Naive thymus-derived CD4-positive, alpha-beta T cell (primary cell): ENCODE measurements at regions of chr19 and their contacts with region 1.

Region 1: DNA sequence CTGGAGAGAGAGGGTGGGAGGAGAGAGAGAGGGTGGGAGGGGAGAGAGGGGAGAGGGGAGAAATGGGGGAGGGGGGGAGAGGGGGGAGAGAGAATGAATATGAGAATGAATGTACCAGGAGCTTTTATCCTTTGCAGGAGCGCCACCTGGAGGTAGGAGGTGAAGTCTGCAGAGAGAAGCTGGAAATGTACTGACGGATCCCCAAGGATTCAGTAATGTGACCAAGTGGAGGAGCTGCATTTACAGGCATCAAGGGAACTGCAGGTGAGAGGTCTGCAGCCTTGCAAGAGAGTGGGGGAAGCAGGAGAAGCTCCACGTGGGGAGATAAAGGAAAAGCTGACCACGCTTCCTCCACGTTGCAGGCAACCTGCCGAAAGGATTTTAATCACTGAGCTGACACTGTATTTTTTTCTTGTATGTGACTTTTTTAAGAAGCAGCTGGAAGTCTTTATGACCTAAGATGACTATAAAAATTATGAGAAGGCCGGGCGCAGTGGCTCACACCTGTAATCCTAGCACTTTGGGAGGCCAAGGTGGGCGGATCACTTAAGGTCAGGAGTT is 33.7 kb downstream of the VSTM1 start:
- DNase-seq: peak; percentile 9 to 55 (median 31)
- ATAC-seq: peak; percentile 51
- H3K4me3 ChIP-seq: no peak overlapping the region
- H3K4me3 Mint-ChIP-seq: no peak overlapping the region
- H3K27ac ChIP-seq: no peak overlapping the region
- H3K27ac Mint-ChIP-seq: no peak overlapping the region
- H3K4me1 ChIP-seq: no peaks in the 10 kb centered on the region
- H3K4me1 Mint-ChIP-seq: peaks cover 0 to 8% (median 0%) of the 10 kb centered on the region in 7 donors
- H3K27me3 ChIP-seq: no peaks in the 10 kb centered on the region
- H3K27me3 Mint-ChIP-seq: peaks cover 6 to 38% (median 30%) of the 10 kb centered on the region in 5 donors

Region 2: DNA sequence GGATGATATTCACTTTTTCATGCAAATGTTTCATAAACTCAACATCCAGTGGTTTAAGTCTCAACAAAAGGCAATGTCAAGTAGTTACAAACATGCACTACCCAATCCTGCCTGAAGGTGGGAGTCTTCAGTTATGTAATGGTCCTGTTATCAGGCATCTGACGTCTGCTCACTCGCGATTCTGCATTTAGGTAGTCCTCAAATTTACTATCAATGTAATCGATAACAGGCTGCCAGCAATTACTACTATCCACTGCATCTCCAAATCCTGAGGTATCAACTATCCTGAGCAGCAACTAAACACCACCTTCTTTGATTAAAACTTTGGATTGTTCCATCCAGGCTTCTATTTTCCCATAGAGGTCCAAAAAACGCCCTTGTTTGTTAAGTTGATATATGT is 257.1 kb before region 1 on chr19:
- CTCF ChIA-PET with region 1: no interaction called
- POLR2A ChIA-PET with region 1: no interaction called
- intact Hi-C with region 1: loop called in 1 of 2 experiments (anchors 1 kb)
- DNase-seq: peak in 8 of 9 donors; percentile 13 to 43 (median 32)
- ATAC-seq: peak; percentile 54
- H3K4me3 ChIP-seq: no peak overlapping the region
- H3K4me3 Mint-ChIP-seq: no peak overlapping the region
- H3K27ac ChIP-seq: no peak overlapping the region
- H3K27ac Mint-ChIP-seq: no peak overlapping the region
- H3K4me1 ChIP-seq: peaks cover 0 to 3% of the 10 kb centered on the region in 2 donors
- H3K4me1 Mint-ChIP-seq: peaks cover 0 to 5% (median 0%) of the 10 kb centered on the region in 7 donors
- H3K27me3 ChIP-seq: no peaks in the 10 kb centered on the region
- H3K27me3 Mint-ChIP-seq: peaks cover 0 to 15% (median 6%) of the 10 kb centered on the region in 5 donors

Region 3: DNA sequence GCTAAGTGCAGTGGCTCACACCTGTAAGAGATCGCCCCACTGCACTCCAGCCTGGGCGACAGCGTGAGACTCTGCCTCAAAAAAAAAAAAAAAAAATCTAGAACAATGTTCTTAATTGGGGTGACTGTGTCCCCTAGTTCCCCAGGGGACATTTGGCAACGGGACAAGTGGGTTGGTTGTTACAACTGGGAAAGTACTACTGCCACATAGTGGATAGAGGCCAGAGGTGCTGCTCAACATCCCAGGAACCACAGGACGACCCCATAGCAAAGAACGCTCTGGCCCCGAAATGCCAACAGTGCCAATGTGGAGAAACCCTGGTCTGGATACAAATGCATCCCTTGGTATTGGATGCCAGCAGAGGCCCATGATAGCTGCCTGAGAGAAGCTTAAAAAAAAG is 217.7 kb before region 1 on chr19:
- CTCF ChIA-PET with region 1: no interaction called
- POLR2A ChIA-PET with region 1: no interaction called
- intact Hi-C with region 1: no loop called
- DNase-seq: no peak
- ATAC-seq: no peak
- H3K4me3 ChIP-seq: no peak overlapping the region
- H3K4me3 Mint-ChIP-seq: no peak overlapping the region
- H3K27ac ChIP-seq: no peak overlapping the region
- H3K27ac Mint-ChIP-seq: no peak overlapping the region
- H3K4me1 ChIP-seq: no peaks in the 10 kb centered on the region
- H3K4me1 Mint-ChIP-seq: no peaks in the 10 kb centered on the region
- H3K27me3 ChIP-seq: no peaks in the 10 kb centered on the region
- H3K27me3 Mint-ChIP-seq: peaks cover 0 to 4% (median 0%) of the 10 kb centered on the region in 5 donors

Region 4: DNA sequence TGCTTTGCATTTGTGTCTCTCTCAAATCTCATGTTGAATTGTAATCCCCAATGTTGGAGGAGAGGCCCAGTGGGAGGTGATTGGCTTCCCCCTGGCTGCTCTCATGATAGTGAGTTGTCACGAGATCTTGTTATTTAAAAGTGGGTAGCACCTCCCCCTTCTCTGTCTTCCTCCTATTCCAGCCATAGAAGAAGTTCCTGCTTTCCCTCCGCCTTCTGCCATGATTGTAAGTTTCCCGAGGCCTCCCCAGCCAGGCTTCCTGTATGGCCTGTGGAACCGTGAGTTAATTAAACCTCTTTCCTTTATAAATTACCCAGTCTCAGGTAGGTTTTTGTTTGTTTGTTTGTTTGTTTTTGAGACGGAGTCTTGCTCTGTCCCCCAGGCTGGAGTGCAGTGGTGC is 305.2 kb after region 1 on chr19:
- CTCF ChIA-PET with region 1: no interaction called
- POLR2A ChIA-PET with region 1: no interaction called
- intact Hi-C with region 1: no loop called
- DNase-seq: no peak
- ATAC-seq: no peak
- H3K4me3 ChIP-seq: no peak overlapping the region
- H3K4me3 Mint-ChIP-seq: no peak overlapping the region
- H3K27ac ChIP-seq: no peak overlapping the region
- H3K27ac Mint-ChIP-seq: peak overlapping the region in 1 of 9 donors; percentile 4
- H3K4me1 ChIP-seq: no peaks in the 10 kb centered on the region
- H3K4me1 Mint-ChIP-seq: peaks cover 0 to 17% (median 0%) of the 10 kb centered on the region in 7 donors
- H3K27me3 ChIP-seq: no peaks in the 10 kb centered on the region
- H3K27me3 Mint-ChIP-seq: peaks cover 0 to 14% (median 0%) of the 10 kb centered on the region in 5 donors